ENCODE measurements at regions of chr1 and their contacts with region 1.

Region 1: DNA sequence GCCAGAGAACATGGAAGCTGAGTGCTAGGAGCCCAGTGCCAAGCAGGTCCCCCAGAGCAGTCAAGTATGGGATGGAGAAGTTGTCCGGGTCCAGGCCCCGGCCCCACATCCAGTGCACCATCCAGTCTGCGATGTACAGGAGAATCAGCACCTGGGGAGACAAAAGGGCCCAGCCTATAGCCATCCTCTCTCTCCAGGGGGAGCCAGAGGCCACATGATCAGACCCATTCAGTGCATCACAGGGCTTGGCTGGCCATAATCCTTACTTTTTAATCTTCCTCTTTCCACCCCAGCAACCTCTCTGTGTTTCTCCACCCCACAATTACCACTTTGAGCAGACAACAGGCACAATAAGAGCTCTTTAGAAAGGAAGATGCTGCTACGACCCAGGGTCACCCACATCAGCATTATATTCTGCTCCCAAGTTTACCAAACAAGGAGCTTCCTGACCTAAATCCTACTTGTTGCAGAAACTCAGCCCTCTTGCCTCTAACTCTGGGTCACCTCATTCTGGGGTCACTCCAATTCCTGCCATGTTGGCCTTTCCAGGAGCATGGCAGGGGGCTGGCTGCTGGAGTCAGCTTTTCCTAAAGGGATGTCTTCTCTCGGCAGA is 16.4 kb upstream of the RAB29 start:
- DNase-seq: peak; percentile 74
- ATAC-seq: peak; percentile 93
- H3K4me3 Mint-ChIP-seq: no peak overlapping the region
- H3K27ac Mint-ChIP-seq: no peak overlapping the region
- H3K4me1 Mint-ChIP-seq: no peaks in the 10 kb centered on the region
- H3K27me3 Mint-ChIP-seq: no peaks in the 10 kb centered on the region

Region 2: GRCh38 chr1:205805082-205805712 is 13.5 kb after region 1 on chr1:
- CTCF ChIA-PET with region 1: interaction called, 22 read pairs
- POLR2A ChIA-PET with region 1: interaction called, 3 read pairs
- DNase-seq: peak; percentile 30
- ATAC-seq: peak; percentile 47
- H3K4me3 Mint-ChIP-seq: peak overlapping the region; percentile 23
- H3K27ac Mint-ChIP-seq: peak overlapping the region; percentile 70
- H3K4me1 Mint-ChIP-seq: peaks cover 38% of the 10 kb centered on the region
- H3K27me3 Mint-ChIP-seq: no peaks in the 10 kb centered on the region

Region 3: DNA sequence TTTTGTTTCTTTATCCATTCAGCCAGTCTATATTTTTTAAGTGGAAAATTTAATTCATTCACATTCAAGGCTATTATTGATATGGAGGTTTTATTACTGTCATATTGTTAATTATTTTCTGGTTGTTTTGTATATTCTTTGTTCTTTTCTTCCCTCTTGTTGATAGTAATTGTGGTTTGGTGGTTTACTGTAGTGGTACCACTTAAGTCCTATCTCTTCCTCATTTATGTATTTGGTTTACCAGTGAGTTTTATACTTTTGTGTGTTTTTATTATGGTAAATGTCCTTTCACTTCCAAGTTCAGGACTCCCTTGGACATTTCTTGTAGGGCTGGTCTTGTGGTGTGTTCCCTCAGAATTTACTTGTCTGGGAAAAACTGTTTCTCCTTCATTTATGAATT is 86.4 kb after region 1 on chr1:
- CTCF ChIA-PET with region 1: no interaction called
- POLR2A ChIA-PET with region 1: no interaction called
- DNase-seq: no peak
- ATAC-seq: no peak
- H3K4me3 Mint-ChIP-seq: no peak overlapping the region
- H3K27ac Mint-ChIP-seq: no peak overlapping the region
- H3K4me1 Mint-ChIP-seq: peaks cover 3% of the 10 kb centered on the region
- H3K27me3 Mint-ChIP-seq: peaks cover 26% of the 10 kb centered on the region

Region 4: DNA sequence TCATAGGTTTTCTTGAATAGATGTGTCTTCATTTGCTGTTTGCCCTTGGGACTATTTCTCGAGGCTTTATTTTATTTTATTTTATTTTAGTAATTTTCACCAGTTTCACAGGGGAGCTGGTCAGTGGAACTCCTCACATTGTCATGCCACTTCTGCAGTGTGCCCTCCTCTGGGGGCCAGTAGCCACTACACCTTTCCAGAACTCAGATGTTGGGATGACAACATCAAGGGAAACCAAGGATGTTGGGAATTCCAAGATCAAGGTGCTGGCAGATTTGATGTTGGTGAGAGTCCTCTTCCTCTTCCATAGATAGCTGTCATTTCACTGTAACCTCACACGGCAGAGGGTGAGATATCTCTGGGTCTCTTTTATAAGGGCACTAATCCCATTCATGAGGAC is 116.1 kb after region 1 on chr1:
- CTCF ChIA-PET with region 1: interaction called, 13 read pairs
- POLR2A ChIA-PET with region 1: no interaction called
- DNase-seq: no peak
- ATAC-seq: no peak
- H3K4me3 Mint-ChIP-seq: no peak overlapping the region
- H3K27ac Mint-ChIP-seq: no peak overlapping the region
- H3K4me1 Mint-ChIP-seq: no peaks in the 10 kb centered on the region
- H3K27me3 Mint-ChIP-seq: peaks cover 22% of the 10 kb centered on the region

Region 5: DNA sequence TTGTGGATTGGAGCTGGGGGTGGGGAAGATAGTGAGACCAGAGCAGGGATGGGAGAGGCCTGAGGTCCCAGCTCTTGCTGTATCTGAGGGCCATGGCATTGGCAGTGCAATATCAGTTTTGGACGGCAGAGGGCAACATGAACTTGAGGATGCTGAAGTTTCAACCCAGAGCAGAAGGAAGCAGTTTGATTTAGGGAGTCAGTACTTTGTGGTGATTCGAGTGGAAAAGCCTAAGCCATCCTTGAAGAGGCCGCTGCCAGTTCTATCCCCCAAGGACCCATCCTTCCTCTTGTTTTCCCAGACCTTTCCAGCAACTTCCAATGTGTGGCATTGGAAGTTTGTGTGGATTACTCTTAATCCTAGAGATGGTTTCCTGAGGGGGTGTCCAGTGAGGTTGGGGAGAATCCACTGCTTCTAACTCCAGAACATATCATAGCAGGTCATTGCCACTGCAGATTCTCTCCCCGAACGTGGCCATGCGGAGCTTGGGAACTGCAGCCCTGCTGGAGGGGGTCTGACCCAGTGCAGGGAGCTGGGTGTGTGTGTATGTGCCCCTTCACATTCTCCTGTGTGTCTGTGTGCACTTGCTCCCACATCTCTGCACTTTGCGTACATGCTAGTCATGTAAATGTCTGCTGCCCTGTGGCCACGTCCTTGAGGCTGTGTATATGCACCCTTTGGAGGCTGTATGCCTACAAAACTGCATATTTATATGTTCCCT is 127.5 kb after region 1 on chr1:
- CTCF ChIA-PET with region 1: interaction called, 26 read pairs
- POLR2A ChIA-PET with region 1: no interaction called
- DNase-seq: peak; percentile 80
- ATAC-seq: peak; percentile 81
- H3K4me3 Mint-ChIP-seq: no peak overlapping the region
- H3K27ac Mint-ChIP-seq: no peak overlapping the region
- H3K4me1 Mint-ChIP-seq: peaks cover 8% of the 10 kb centered on the region
- H3K27me3 Mint-ChIP-seq: peaks cover 4% of the 10 kb centered on the region

Measured in activated CD8-positive, alpha-beta T cell treated with anti-CD3 and anti-CD28 coated beads, Interleukin-2, amount 10 ng/mL, durations not matched to agents 7 days and 5 days (primary cell).